IMR-90 (cell line): ENCODE measurements at regions of chr1 and their contacts with region 1.

Region 1: GRCh38 chr1:87084244-87084836 is 169.9 kb downstream of the HS2ST1 start:
- DNase-seq: peak; percentile 60
- ATAC-seq: peak; percentile 78
- H3K4me3 ChIP-seq: no peak overlapping the region
- H3K27ac ChIP-seq: no peak overlapping the region
- H3K4me1 ChIP-seq: peaks cover 2% of the 10 kb centered on the region; the same call in 1 of the 2 replicates
- H3K27me3 ChIP-seq: no peaks in the 10 kb centered on the region
- CTCF ChIP-seq: peak; percentile 64
- POLR2A ChIP-seq: no peak
- RAD21 ChIP-seq: peak; percentile 60

Region 2: GRCh38 chr1:86380257-86380861 is 704.0 kb before region 1 on chr1:
- CTCF ChIA-PET with region 1: no interaction called
- POLR2A ChIA-PET with region 1: no interaction called
- dilution Hi-C with region 1: no loop called
- in situ Hi-C with region 1: loop called (anchors 25 kb)
- intact Hi-C with region 1: loop called (anchors 5 kb)
- DNase-seq: peak; percentile 86
- ATAC-seq: peak; percentile 97
- H3K4me3 ChIP-seq: no peak overlapping the region
- H3K27ac ChIP-seq: no peak overlapping the region
- H3K4me1 ChIP-seq: no peaks in the 10 kb centered on the region
- H3K27me3 ChIP-seq: no peaks in the 10 kb centered on the region
- CTCF ChIP-seq: peak; percentile 79
- POLR2A ChIP-seq: no peak
- RAD21 ChIP-seq: peak; percentile 91

Region 3: GRCh38 chr1:86470859-86471258 is 613.5 kb before region 1 on chr1:
- CTCF ChIA-PET with region 1: no interaction called
- POLR2A ChIA-PET with region 1: no interaction called
- dilution Hi-C with region 1: no loop called
- in situ Hi-C with region 1: loop called (anchors 25 kb)
- intact Hi-C with region 1: loop called (anchors 10 kb)
- DNase-seq: no peak
- ATAC-seq: no peak
- H3K4me3 ChIP-seq: no peak overlapping the region
- H3K27ac ChIP-seq: no peak overlapping the region
- H3K4me1 ChIP-seq: 0 out of 2 replicates have a peak, but pooled peaks cover 3% of the 10 kb centered on the region
- H3K27me3 ChIP-seq: peaks cover 16% of the 10 kb centered on the region
- CTCF ChIP-seq: no peak
- POLR2A ChIP-seq: no peak
- RAD21 ChIP-seq: no peak

Region 4: GRCh38 chr1:86704458-86704971 is 379.8 kb before region 1 on chr1 and contains the start of gene SH3GLB1:
- CTCF ChIA-PET with region 1: no interaction called
- POLR2A ChIA-PET with region 1: no interaction called
- dilution Hi-C with region 1: no loop called
- in situ Hi-C with region 1: no loop called
- intact Hi-C with region 1: loop called (anchors 2 kb)
- DNase-seq: peak; percentile 82
- ATAC-seq: peak; percentile 93
- H3K4me3 ChIP-seq: peak within 1 kb of the TSS; percentile 64
- H3K27ac ChIP-seq: peak within 1 kb of the TSS; percentile 90
- H3K4me1 ChIP-seq: no peaks in the 10 kb centered on the region; the same call in 1 of the 2 replicates
- H3K27me3 ChIP-seq: no peaks in the 10 kb centered on the region
- CTCF ChIP-seq: peak; percentile 85
- POLR2A ChIP-seq: peak; percentile 68
- RAD21 ChIP-seq: 0 out of 2 replicates have a peak, but pooled peaks have one; percentile 22
- total RNA-seq, gene SH3GLB1: 22.2 and 30.3 TPM in 2 replicates

Region 5: DNA sequence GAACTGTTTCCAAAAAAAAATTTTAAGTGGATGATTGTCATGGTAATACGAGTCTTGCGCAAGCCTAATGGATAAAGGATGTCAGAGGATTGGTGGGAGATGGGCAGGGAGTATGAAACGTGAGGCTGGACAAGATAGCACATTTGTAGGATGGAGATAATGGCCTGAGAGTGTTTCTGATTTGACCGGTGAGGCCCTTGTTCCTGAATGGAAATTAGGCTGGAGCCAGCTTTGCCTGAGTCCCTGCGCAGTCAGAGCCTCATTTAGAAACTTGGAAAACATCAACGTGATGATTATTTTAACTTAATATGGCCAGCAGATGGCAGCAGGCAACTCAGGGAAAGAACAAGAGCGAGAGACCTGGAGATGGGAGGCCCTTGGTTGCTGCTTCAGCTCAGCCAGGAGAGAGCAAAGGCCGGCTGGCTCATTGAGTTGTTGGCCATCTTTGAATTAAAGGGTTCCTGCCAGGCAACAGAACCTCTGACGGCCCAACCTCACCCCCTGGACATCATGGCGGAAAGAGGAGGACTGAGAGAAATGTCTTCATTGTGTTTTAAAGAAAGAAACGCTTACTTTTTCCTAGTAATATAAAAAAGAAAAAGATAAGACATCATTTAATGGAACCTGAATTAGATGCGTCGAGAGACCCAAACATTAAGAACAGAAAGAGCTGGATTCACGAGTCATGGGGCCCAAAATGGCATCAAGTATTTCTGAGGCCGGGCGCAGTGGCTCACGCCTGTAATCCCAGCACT is 250.7 kb before region 1 on chr1:
- CTCF ChIA-PET with region 1: interaction called, 5 read pairs
- POLR2A ChIA-PET with region 1: no interaction called
- dilution Hi-C with region 1: no loop called
- in situ Hi-C with region 1: loop called (anchors 10 kb)
- intact Hi-C with region 1: loop called (anchors 1 kb)
- DNase-seq: peak; percentile 87
- ATAC-seq: peak; percentile 97
- H3K4me3 ChIP-seq: no peak overlapping the region
- H3K27ac ChIP-seq: no peak overlapping the region
- H3K4me1 ChIP-seq: no peaks in the 10 kb centered on the region
- H3K27me3 ChIP-seq: no peaks in the 10 kb centered on the region
- CTCF ChIP-seq: peak; percentile 79
- POLR2A ChIP-seq: no peak
- RAD21 ChIP-seq: peak; percentile 81

Region 6: GRCh38 chr1:87180682-87181081 is 96.3 kb after region 1 on chr1:
- CTCF ChIA-PET with region 1: no interaction called
- POLR2A ChIA-PET with region 1: no interaction called
- dilution Hi-C with region 1: no loop called
- in situ Hi-C with region 1: no loop called
- intact Hi-C with region 1: no loop called
- DNase-seq: no peak
- ATAC-seq: no peak
- H3K4me3 ChIP-seq: no peak overlapping the region
- H3K27ac ChIP-seq: no peak overlapping the region
- H3K4me1 ChIP-seq: no peaks in the 10 kb centered on the region
- H3K27me3 ChIP-seq: peaks cover 3% of the 10 kb centered on the region
- CTCF ChIP-seq: no peak
- POLR2A ChIP-seq: no peak
- RAD21 ChIP-seq: no peak